ENCODE measurements at regions of chr15 and their contacts with region 1.

Region 1: DNA sequence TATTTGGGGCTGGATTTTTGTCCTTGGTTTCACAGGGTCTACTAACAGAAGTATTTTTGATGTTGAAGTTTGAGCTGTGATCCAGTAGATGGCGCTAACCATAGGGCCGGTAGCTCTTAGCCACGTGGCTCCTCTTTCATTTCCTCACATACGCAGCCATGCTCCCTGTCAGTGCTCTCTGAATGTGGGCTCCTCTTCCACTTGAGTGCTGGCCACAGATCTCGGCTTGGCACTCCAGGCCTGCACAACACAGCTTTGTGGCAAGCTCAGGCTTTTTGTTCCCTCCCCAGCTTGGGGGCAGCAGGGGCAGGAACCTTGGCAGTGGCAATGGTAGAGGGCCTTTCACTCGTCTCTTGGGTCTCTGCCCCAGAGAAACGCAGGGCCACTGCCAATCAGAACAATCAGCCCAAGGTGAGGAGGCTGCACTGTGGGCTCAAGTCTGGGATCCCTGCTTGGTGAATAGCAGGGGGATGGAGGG is 18.6 kb upstream of the DNAAF4 start:
- DNase-seq: peak; percentile 31
- H3K4me3 ChIP-seq: no peak overlapping the region
- H3K27ac ChIP-seq: no peak overlapping the region
- H3K4me1 ChIP-seq: no peaks in the 10 kb centered on the region
- H3K27me3 ChIP-seq: peaks cover 9 to 13% of the 10 kb centered on the region in 2 experiments
- CTCF ChIP-seq: peak; percentile 69 to 75
- POLR2A ChIP-seq: no peak

Region 2: GRCh38 chr15:55494931-55495330 is 31.7 kb before region 1 on chr15:
- CTCF ChIA-PET with region 1: interaction called, 10 read pairs
- POLR2A ChIA-PET with region 1: no interaction called
- dilution Hi-C with region 1: no loop called
- intact Hi-C with region 1: no loop called
- DNase-seq: peak; percentile 44
- H3K4me3 ChIP-seq: no peak overlapping the region
- H3K27ac ChIP-seq: peak overlapping the region; percentile 21
- H3K4me1 ChIP-seq: peaks cover 33% of the 10 kb centered on the region
- H3K27me3 ChIP-seq: no peaks in the 10 kb centered on the region
- CTCF ChIP-seq: no peak
- POLR2A ChIP-seq: no peak

Region 3: DNA sequence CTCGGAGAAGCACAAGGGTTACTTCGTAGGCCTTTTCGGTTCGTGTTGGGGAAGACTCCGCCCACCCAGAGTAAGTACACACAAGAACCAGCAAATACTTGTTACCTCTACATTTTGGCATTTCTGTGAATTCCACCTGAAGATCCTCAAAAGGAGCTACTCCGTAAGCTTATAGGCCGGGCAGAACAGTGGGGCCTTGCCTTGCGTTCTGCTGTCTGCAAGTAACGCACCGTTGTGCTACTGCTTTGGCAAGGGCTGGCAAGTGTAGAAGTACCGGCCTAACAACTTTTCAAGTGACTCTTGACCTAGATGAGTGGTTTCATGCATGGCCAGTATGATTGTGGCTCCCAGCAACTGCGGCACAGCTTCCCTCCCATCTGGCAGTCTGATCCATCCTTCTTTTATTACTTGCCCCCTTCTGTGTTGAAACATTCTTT is 12.2 kb before region 1 on chr15:
- CTCF ChIA-PET with region 1: interaction called, 30 read pairs
- POLR2A ChIA-PET with region 1: no interaction called
- dilution Hi-C with region 1: no loop called
- intact Hi-C with region 1: no loop called
- DNase-seq: no peak
- H3K4me3 ChIP-seq: no peak overlapping the region
- H3K27ac ChIP-seq: no peak overlapping the region
- H3K4me1 ChIP-seq: no peaks in the 10 kb centered on the region
- H3K27me3 ChIP-seq: no peaks in the 10 kb centered on the region
- CTCF ChIP-seq: no peak
- POLR2A ChIP-seq: no peak

Region 4: GRCh38 chr15:55588070-55588814 is 61.6 kb after region 1 on chr15 and contains the start of gene PYGO1:
- CTCF ChIA-PET with region 1: interaction called, 9 read pairs
- POLR2A ChIA-PET with region 1: no interaction called
- dilution Hi-C with region 1: no loop called
- intact Hi-C with region 1: loop called (anchors 2 kb)
- DNase-seq: peak; percentile 70
- H3K4me3 ChIP-seq: peak within 1 kb of the TSS; percentile 44 to 80 (median 68)
- H3K27ac ChIP-seq: peak within 1 kb of the TSS; percentile 13
- H3K4me1 ChIP-seq: peaks cover 8% of the 10 kb centered on the region
- H3K27me3 ChIP-seq: no peaks in the 10 kb centered on the region
- CTCF ChIP-seq: no peak
- POLR2A ChIP-seq: no peak
- total RNA-seq, gene PYGO1: 5.7 and 7.6 TPM in 2 replicates

Region 5: DNA sequence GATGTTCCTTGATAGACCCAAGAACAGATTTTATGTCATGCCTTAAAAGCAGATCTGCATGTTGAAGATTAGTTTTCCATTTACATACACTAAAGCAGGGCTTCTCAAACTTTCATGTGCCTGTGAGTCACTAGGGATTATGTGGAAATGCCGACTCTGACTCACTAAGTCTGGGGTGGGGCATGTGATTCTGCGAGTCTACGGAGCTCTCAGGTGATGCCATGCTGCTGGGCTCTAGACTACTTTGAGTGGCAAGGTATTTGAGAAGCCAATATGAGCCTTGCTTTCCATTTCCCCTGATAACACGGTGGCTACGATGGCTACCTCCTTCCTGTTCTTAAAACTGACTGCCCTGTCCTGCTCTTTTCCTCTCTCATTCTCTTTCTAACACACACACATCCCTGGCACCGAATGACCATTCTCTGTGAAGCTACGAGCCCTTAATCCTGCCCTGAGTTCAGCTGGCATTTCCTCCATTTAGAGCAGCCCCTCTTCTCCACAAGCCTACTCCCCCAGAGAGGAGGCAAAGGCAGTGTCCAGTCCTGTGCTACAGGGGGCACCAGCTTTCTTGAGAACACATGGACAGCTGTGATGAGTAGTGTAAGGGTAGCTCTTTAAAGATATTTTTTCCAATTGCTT is 101.3 kb after region 1 on chr15:
- CTCF ChIA-PET with region 1: interaction called, 13 read pairs
- POLR2A ChIA-PET with region 1: no interaction called
- dilution Hi-C with region 1: no loop called
- intact Hi-C with region 1: no loop called
- DNase-seq: peak; percentile 76
- H3K4me3 ChIP-seq: no peak overlapping the region
- H3K27ac ChIP-seq: no peak overlapping the region
- H3K4me1 ChIP-seq: peaks cover 6% of the 10 kb centered on the region
- H3K27me3 ChIP-seq: no peaks in the 10 kb centered on the region
- CTCF ChIP-seq: peak in 1 of 2 donors; percentile 19
- POLR2A ChIP-seq: no peak

Region 6: GRCh38 chr15:55637086-55637485 is 110.5 kb after region 1 on chr15:
- CTCF ChIA-PET with region 1: interaction called, 97 read pairs
- POLR2A ChIA-PET with region 1: interaction called, 9 read pairs
- dilution Hi-C with region 1: no loop called
- intact Hi-C with region 1: loop called (anchors 1 kb)
- DNase-seq: no peak
- H3K4me3 ChIP-seq: no peak overlapping the region
- H3K27ac ChIP-seq: no peak overlapping the region
- H3K4me1 ChIP-seq: no peaks in the 10 kb centered on the region
- H3K27me3 ChIP-seq: no peaks in the 10 kb centered on the region
- CTCF ChIP-seq: no peak
- POLR2A ChIP-seq: no peak

Region 7: GRCh38 chr15:55799291-55800212 is 273.0 kb after region 1 on chr15:
- CTCF ChIA-PET with region 1: interaction called, 5 read pairs
- POLR2A ChIA-PET with region 1: no interaction called
- dilution Hi-C with region 1: no loop called
- intact Hi-C with region 1: loop called (anchors 1 kb)
- DNase-seq: peak; percentile 69
- H3K4me3 ChIP-seq: no peak overlapping the region
- H3K27ac ChIP-seq: no peak overlapping the region
- H3K4me1 ChIP-seq: no peaks in the 10 kb centered on the region
- H3K27me3 ChIP-seq: peaks cover 5 to 7% of the 10 kb centered on the region in 2 experiments
- CTCF ChIP-seq: peak; percentile 72
- POLR2A ChIP-seq: no peak

Region 8: DNA sequence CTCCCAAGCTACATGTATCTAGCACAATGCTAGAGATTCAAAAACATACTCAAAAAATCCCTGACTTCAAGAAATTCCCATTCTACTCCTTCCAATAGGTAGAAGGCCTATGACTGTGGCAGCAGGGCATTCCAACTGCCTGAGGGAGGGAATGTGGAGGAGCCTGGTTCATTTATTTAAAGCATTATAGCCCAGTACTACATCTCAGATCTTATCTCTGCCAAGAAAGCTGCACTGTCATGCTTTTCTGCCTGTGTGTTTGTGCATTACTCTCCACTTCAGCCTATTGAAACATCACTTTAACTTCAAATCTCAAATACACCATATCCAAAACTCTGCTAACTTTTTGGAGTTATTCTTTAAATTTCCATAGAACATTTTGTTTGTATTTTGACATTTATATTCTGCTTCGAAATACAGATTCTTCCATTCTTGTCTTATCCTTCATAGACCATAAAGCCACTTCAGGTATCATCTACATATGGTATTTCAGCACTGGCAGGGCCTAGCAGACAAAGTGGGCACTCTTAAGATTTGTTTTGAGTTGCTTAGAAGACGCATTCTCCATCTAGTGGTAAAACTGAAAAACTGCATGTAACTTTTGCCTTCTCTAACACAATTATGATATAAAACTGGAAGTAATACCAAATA is 525.9 kb after region 1 on chr15:
- CTCF ChIA-PET with region 1: no interaction called
- POLR2A ChIA-PET with region 1: no interaction called
- dilution Hi-C with region 1: no loop called
- intact Hi-C with region 1: no loop called
- DNase-seq: peak; percentile 56
- H3K4me3 ChIP-seq: no peak overlapping the region
- H3K27ac ChIP-seq: no peak overlapping the region
- H3K4me1 ChIP-seq: peaks cover 3% of the 10 kb centered on the region
- H3K27me3 ChIP-seq: no peaks in the 10 kb centered on the region
- CTCF ChIP-seq: peak; percentile 40 to 60
- POLR2A ChIP-seq: no peak